ENCODE measurements at regions of chr14 and their contacts with region 1.

Region 1: DNA sequence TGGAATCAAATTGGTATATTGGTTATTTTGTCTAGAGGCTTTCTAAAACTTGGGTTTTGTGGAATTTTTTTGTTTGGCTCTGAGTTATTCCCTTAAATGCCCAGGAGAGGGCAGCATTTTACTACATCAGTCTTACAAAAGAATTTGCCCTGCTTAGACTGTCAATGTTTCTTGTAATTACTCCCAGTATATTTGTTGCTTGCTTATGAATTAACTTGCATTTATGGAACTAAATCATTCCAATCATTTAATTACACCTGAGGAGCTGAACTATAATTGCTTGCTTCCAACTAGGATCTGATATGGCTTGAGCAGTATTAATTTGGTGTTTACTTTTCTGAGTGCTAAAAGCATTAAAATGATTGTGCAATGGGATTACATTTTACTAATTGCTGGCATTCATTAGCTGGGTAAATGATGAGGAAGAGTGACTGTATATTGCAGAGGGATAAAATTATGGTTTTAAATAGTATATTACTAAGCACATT is 48.7 kb downstream of the MIPOL1 start:
- DNase-seq: peak; percentile 69
- H3K4me3 ChIP-seq: no peak overlapping the region
- H3K27ac ChIP-seq: no peak overlapping the region
- H3K4me1 ChIP-seq: no peaks in the 10 kb centered on the region
- H3K27me3 ChIP-seq: no peaks in the 10 kb centered on the region

Region 2: DNA sequence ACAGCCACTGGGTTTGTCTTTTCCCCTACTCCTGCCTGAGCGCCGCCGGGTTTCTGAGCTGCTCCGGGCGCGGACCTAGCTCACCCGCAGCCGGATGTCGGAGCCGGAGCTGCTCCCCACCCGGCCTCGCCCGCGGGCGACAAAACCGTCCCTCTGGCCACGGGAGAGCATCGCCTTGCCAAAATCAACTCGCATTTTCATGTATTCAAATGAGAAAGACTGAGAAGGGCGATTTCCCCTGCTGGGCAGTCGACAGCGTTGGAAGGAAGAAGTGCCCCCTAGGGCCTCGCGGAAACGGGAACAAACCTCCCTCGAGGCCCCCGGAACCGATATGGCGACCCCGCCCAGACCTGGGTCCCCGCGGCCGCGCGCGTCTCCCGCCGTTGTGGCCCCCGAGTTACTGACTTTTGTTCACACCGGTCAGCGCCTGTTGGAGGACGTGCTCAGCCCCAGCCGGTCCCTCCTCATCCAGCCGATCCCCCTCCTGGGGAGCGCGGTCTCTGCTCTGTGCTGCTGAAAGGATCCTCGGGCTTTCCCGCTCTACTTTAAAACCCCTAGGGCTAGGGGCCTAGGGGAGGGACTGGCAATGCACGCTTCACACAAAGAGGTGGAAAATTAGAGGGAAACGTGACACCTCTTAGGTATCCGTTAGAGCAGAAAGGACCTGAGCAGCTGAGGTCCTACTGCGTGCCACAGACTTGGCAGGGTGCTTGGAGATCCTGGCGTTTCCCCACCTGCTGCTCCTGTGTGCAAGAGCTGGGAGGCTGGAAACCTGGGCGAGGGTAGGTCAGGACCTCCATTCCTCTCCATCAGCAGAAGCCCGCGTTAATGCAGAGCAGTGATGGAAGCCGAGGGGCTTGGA is 353.3 kb after region 1 on chr14:
- in situ Hi-C with region 1: loop called (anchors 10 kb)
- DNase-seq: peak; percentile 35
- H3K4me3 ChIP-seq: peak overlapping the region; percentile 15; the same call in 1 of the 2 replicates
- H3K27ac ChIP-seq: no peak overlapping the region
- H3K4me1 ChIP-seq: peaks cover 5% of the 10 kb centered on the region; the same call in 1 of the 2 replicates
- H3K27me3 ChIP-seq: peaks cover 92% of the 10 kb centered on the region

Region 3: GRCh38 chr14:37864861-37865718 is 618.6 kb after region 1 on chr14:
- in situ Hi-C with region 1: loop called (anchors 10 kb)
- DNase-seq: peak; percentile 87
- H3K4me3 ChIP-seq: no peak overlapping the region
- H3K27ac ChIP-seq: no peak overlapping the region
- H3K4me1 ChIP-seq: peaks cover 14% of the 10 kb centered on the region
- H3K27me3 ChIP-seq: no peaks in the 10 kb centered on the region